ENCODE measurements at regions of chr9 and their contacts with region 1.

Region 1: GRCh38 chr9:2066312-2067273 is 51.4 kb downstream of the SMARCA2 start:
- DNase-seq: peak in 6 of 9 donors; percentile 21 to 52 (median 32)
- ATAC-seq: peak; percentile 67
- H3K4me3 ChIP-seq: no peak overlapping the region
- H3K4me3 Mint-ChIP-seq: no peak overlapping the region
- H3K27ac ChIP-seq: no peak overlapping the region
- H3K27ac Mint-ChIP-seq: peak overlapping the region in 3 of 9 donors; percentile 27 to 53 (median 30)
- H3K4me1 ChIP-seq: no peaks in the 10 kb centered on the region
- H3K4me1 Mint-ChIP-seq: peaks cover 0 to 10% (median 3%) of the 10 kb centered on the region in 7 donors
- H3K27me3 ChIP-seq: no peaks in the 10 kb centered on the region
- H3K27me3 Mint-ChIP-seq: no peaks in the 10 kb centered on the region

Region 2: GRCh38 chr9:1709345-1709744 is 357.2 kb before region 1 on chr9:
- CTCF ChIA-PET with region 1: no interaction called
- POLR2A ChIA-PET with region 1: no interaction called
- intact Hi-C with region 1: loop called in 1 of 2 experiments (anchors 2 kb)
- DNase-seq: peak in 1 of 9 donors; percentile 1
- ATAC-seq: no peak
- H3K4me3 ChIP-seq: no peak overlapping the region
- H3K4me3 Mint-ChIP-seq: no peak overlapping the region
- H3K27ac ChIP-seq: no peak overlapping the region
- H3K27ac Mint-ChIP-seq: no peak overlapping the region
- H3K4me1 ChIP-seq: no peaks in the 10 kb centered on the region
- H3K4me1 Mint-ChIP-seq: no peaks in the 10 kb centered on the region
- H3K27me3 ChIP-seq: no peaks in the 10 kb centered on the region
- H3K27me3 Mint-ChIP-seq: peaks cover 8 to 37% (median 18%) of the 10 kb centered on the region in 5 donors

Region 3: DNA sequence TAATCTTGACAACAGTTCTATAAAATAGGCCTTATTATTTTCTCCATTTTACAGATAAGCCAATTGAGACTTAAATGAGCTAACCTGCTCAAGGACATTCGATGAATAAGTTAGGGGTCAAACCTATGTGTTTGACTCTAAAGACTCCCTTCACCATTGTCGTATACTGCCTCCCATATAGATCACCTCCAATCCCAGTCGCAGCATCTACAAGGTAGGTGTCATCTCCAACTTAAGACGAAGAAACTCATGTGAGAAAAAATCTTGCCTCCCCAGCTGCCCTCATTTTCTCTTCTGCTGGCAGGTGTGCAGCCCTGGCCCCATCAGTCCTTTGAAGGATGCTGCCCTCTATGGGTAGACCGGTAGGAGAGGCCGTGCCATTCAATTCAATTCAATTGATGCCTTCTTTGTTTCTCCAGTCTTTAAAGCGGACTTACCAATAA is 126.6 kb before region 1 on chr9:
- CTCF ChIA-PET with region 1: interaction called, 4 read pairs
- POLR2A ChIA-PET with region 1: no interaction called
- intact Hi-C with region 1: loop called in 1 of 2 experiments (anchors 1 kb)
- DNase-seq: peak in 6 of 9 donors; percentile 19 to 44 (median 26)
- ATAC-seq: peak; percentile 70
- H3K4me3 ChIP-seq: no peak overlapping the region
- H3K4me3 Mint-ChIP-seq: no peak overlapping the region
- H3K27ac ChIP-seq: no peak overlapping the region
- H3K27ac Mint-ChIP-seq: no peak overlapping the region
- H3K4me1 ChIP-seq: no peaks in the 10 kb centered on the region
- H3K4me1 Mint-ChIP-seq: peaks cover 0 to 5% (median 0%) of the 10 kb centered on the region in 7 donors
- H3K27me3 ChIP-seq: no peaks in the 10 kb centered on the region
- H3K27me3 Mint-ChIP-seq: peaks cover 0 to 11% (median 6%) of the 10 kb centered on the region in 5 donors

Region 4: DNA sequence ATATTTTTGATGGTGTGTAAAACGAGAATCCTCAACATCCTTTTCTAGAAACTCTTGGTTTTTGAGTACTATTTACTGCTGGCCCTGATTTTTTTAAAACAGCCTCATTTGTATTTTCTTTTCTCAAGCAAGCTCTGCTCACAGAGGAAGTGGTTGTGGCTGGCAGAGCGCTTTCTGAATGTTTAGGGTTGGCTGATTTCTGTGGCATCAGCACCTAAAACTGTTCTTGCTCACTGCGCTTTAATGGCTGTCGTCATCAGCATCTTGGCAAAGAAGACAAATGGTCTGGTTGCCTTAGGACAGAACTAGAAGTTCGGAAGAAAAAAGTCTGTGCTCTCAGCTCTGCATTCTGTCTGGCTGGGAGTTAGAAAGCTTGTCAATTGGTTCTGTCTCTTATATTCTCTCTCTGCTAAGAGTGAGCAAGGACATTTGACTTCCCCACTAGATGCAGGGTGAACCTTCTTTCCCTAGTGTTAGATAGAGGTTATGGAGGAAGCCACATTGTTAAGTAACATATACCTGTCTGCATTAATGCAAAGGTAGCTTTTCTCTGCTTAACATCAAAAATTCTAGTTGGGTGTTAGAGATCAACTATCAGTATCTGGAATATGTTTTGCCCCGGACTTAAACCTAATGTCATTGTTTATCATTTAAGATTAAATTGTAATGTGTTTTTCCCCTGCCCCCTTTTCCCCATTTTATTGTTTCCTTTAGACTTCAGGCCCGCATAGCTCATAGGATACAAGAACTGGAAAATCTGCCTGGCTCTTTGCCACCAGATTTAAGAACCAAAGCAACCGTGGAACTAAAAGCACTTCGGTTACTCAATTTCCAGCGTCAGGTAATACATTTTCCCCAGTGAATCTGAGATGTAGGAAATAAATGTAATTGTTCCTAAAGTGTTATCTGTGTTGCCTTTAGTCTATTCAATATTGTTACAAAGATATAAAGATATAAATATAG is 12.4 kb before region 1 on chr9:
- CTCF ChIA-PET with region 1: interaction called, 4 read pairs
- POLR2A ChIA-PET with region 1: interaction called, 4 read pairs
- intact Hi-C with region 1: loop called in 1 of 2 experiments (anchors 1 kb)
- DNase-seq: peak; percentile 23 to 90 (median 83)
- ATAC-seq: peak; percentile 97
- H3K4me3 ChIP-seq: no peak overlapping the region
- H3K4me3 Mint-ChIP-seq: peak overlapping the region; percentile 2 to 79 (median 69)
- H3K27ac ChIP-seq: peak overlapping the region; percentile 60
- H3K27ac Mint-ChIP-seq: peak overlapping the region; percentile 87 to 97 (median 93)
- H3K4me1 ChIP-seq: peaks cover 26 to 29% of the 10 kb centered on the region in 2 donors
- H3K4me1 Mint-ChIP-seq: peaks cover 24 to 71% (median 64%) of the 10 kb centered on the region in 7 donors
- H3K27me3 ChIP-seq: no peaks in the 10 kb centered on the region
- H3K27me3 Mint-ChIP-seq: no peaks in the 10 kb centered on the region

Measured in naive thymus-derived CD4-positive, alpha-beta T cell (primary cell).